Gastrocnemius medialis (tissue), 4 donors: ENCODE measurements at regions of chr10 and their contacts with region 1.

Region 1: DNA sequence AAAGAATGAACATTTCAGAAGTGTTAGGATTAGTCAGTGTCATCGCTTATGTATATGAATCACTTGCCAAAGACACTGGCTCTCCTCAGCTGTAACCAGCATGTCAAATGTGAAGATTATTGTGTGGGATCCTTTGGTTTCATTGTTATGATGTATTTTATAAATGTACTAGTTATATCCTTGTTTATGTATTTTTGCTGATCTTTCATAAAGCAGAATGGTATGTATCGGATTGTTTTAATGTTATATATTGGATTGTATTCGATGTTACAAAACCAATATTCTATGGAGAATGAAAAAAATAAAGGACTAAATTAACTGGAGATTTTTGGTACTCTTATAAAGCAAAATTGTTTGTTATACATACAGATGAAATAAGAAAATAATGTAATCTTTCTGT is 49.2 kb downstream of the ACADSB start:
- DNase-seq: no peak
- ATAC-seq: no peak
- H3K4me3 ChIP-seq: no peak overlapping the region
- H3K27ac ChIP-seq: no peak overlapping the region
- H3K4me1 ChIP-seq: no peaks in the 10 kb centered on the region
- H3K27me3 ChIP-seq: no peaks in the 10 kb centered on the region
- CTCF ChIP-seq: no peak
- POLR2A ChIP-seq: no peak

Region 2: GRCh38 chr10:123117644-123118417 is 59.9 kb after region 1 on chr10:
- in situ Hi-C with region 1: no loop called
- intact Hi-C with region 1: loop called (anchors 2 kb)
- DNase-seq: no peak
- ATAC-seq: no peak
- H3K4me3 ChIP-seq: no peak overlapping the region
- H3K27ac ChIP-seq: no peak overlapping the region
- H3K4me1 ChIP-seq: no peaks in the 10 kb centered on the region
- H3K27me3 ChIP-seq: peaks cover 14 to 20% (median 19%) of the 10 kb centered on the region in 3 donors
- CTCF ChIP-seq: no peak
- POLR2A ChIP-seq: no peak